Natural killer cell (primary cell): ENCODE measurements at regions of chr1 and their contacts with region 1.

Region 1: DNA sequence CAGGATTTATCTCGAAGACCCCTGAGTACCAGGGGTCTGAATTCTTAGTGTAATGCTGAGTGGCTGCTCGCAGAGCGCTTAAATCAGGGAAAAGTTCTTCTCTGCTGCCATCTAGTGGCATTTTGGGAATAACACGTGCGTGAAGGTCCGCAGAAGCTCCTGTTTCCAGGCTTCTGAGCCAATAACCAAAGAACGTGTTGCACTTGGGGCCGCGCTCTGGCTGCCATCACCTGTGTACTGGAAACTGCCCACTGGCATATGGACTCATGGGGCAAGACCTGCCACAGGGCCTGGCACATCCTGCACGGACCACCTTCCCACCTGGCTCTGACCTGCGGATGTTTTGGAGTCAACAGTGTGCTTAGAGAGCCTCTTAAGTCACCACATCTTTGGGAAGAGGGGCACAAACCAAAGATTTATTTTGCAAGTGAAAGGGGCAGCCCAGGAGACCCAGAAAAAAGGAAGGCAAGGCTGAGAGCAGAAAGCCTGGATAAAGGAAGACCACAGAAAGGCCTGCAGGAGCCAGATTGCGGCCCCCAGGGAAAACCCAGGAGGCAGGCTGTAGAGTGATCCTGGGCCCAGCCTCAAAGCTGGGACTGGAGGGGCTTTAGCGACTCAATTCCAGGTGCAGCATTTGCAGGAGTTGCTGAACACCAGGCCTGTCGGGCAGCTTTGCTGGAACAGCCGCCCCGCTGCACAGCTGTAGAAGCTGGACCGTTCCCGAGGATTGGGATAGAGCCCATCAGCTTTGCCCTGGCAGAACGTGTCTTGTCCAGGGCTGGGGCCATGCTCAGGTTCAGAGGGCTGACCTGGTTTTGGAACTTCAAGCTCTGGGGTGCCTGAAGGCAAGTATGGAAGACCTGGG is 13.0 kb downstream of the CHIT1 start:
- DNase-seq: peak; percentile 25 to 80
- ATAC-seq: peak; percentile 34 to 80 (median 50)
- H3K4me3 ChIP-seq: no peak overlapping the region
- H3K4me3 Mint-ChIP-seq: no peak overlapping the region
- H3K27ac ChIP-seq: no peak overlapping the region
- H3K27ac Mint-ChIP-seq: no peak overlapping the region
- H3K4me1 ChIP-seq: peaks cover 8% of the 10 kb centered on the region
- H3K4me1 Mint-ChIP-seq: peaks cover 0 to 8% of the 10 kb centered on the region in 2 donors
- H3K27me3 ChIP-seq: no peaks in the 10 kb centered on the region
- H3K27me3 Mint-ChIP-seq: peaks cover 20% of the 10 kb centered on the region in 2 donors
- CTCF ChIP-seq: peak; percentile 76

Region 2: DNA sequence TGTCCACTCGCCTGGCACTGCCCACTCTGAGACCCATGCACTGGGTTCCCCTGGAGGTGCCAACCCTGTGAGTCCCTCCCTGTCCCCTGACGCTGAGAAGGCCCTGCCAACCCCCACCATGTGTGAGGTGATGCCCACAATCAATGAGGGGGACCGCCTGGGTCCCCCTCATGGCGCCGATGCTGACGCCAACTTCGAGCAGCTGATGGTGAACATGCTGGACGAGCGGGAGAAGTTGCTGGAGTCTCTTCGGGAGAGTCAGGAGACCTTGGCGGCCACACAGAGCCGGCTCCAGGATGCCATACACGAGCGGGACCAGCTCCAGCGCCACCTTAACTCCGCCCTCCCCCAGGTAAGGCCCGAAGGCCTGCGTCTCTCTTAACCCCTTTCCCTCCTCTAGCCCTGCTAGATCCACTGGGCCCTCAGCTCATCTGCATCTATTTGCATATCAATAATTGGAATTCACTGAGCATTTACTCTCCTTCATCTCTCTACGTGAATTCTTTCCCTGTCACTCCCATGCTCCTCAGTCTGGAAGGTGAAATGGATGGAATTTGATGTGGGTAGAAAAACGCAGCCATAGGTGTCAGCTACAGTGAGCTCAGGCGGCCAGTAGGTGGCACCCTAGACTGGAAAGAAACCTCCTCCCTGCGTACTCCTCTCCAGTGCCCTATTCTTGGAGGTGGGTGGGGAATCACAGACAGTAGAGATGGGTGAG is 177.5 kb before region 1 on chr1:
- intact Hi-C with region 1: loop called (anchors 1 kb)
- DNase-seq: peak; percentile 39 to 81
- ATAC-seq: peak; percentile 67 to 95 (median 94)
- H3K4me3 ChIP-seq: no peak overlapping the region
- H3K4me3 Mint-ChIP-seq: no peak overlapping the region
- H3K27ac ChIP-seq: no peak overlapping the region
- H3K27ac Mint-ChIP-seq: no peak overlapping the region
- H3K4me1 ChIP-seq: no peaks in the 10 kb centered on the region
- H3K4me1 Mint-ChIP-seq: peaks cover 6% of the 10 kb centered on the region in 2 donors
- H3K27me3 ChIP-seq: peaks cover 2% of the 10 kb centered on the region
- H3K27me3 Mint-ChIP-seq: peaks cover 8 to 10% of the 10 kb centered on the region in 2 donors
- CTCF ChIP-seq: peak; percentile 78